Right cardiac atrium (tissue), 5 donors: ENCODE measurements at regions of chr5 and their contacts with region 1.

Region 1: GRCh38 chr5:59188419-59189225 is 605.7 kb downstream of the RAB3C start:
- DNase-seq: peak; percentile 74 to 90 (median 86)
- ATAC-seq: peak; percentile 80 to 82
- H3K4me3 ChIP-seq: peak overlapping the region; percentile 47
- H3K27ac ChIP-seq: no peak overlapping the region
- H3K4me1 ChIP-seq: peaks cover 2% of the 10 kb centered on the region
- H3K27me3 ChIP-seq: no peaks in the 10 kb centered on the region

Region 2: GRCh38 chr5:59367791-59368394 is 179.3 kb after region 1 on chr5:
- intact Hi-C with region 1: loop called (anchors 5 kb)
- DNase-seq: peak; percentile 51 to 72 (median 56)
- ATAC-seq: peak; percentile 68 to 78
- H3K4me3 ChIP-seq: no peak overlapping the region
- H3K27ac ChIP-seq: no peak overlapping the region
- H3K4me1 ChIP-seq: no peaks in the 10 kb centered on the region
- H3K27me3 ChIP-seq: no peaks in the 10 kb centered on the region

Region 3: GRCh38 chr5:59380350-59380951 is 191.8 kb after region 1 on chr5:
- intact Hi-C with region 1: loop called in 1 of 4 experiments (anchors 5 kb)
- DNase-seq: no peak
- ATAC-seq: peak; percentile 40 to 76
- H3K4me3 ChIP-seq: no peak overlapping the region
- H3K27ac ChIP-seq: no peak overlapping the region
- H3K4me1 ChIP-seq: no peaks in the 10 kb centered on the region
- H3K27me3 ChIP-seq: no peaks in the 10 kb centered on the region